OCI-LY7 (cell line): ENCODE measurements at regions of chr5 and their contacts with region 1.

Region 1: DNA sequence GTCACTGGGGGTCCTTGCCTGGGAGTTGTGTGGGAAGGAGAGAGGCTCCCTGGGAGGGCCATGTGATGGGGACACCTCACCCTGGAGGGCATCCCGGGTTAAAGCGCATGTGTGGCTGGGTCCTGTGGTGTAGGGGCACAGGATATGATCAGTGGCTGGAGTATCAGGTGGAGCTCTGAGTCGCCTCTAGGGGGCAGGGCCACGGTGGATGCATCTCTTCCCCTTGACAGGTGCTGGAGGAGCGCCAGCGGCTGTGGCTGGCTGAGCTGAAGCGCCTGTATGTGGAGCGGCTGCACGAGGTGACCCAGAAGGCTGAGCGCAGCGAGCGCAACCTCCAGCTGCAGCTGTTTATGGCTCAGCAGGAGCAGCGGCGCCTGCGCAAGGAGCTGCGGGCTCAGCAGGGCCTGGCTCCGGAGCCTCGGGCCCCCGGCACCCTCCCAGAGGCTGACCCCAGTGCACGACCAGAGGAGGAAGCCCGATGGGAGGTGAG is 7.6 kb downstream of the N4BP3 start:
- DNase-seq: peak; percentile 98
- H3K4me3 ChIP-seq: peak overlapping the region; percentile 37
- H3K27ac ChIP-seq: peak overlapping the region; percentile 90
- H3K4me1 ChIP-seq: peaks cover 81% of the 10 kb centered on the region
- CTCF ChIP-seq: peak; percentile 87

Region 2: DNA sequence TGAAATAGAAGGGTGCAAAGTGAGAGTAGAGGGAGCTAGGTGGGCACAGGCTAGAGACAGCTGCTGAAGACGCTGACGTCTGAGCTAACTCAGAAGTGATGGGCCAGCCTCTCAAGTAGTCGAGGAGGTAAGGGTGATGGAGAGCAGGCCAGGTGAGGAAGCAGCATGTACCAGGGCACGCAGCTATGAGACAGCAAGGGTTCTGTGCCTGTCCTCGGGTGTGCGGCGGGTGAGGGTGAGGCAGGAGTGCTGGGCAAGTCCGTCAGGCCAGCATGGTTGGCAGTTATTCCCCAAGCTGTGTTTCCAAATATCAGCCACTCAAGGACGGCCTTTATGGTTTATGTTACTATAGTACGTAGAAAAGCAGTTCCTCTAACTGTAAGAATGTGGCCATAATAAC is 16.1 kb after region 1 on chr5:
- CTCF ChIA-PET with region 1: interaction called, 3 read pairs
- POLR2A ChIA-PET with region 1: interaction called, 13 read pairs
- intact Hi-C with region 1: no loop called
- DNase-seq: no peak
- H3K4me3 ChIP-seq: no peak overlapping the region
- H3K27ac ChIP-seq: no peak overlapping the region
- H3K4me1 ChIP-seq: peaks cover 5% of the 10 kb centered on the region
- CTCF ChIP-seq: no peak

Region 3: GRCh38 chr5:178146020-178146820 is 25.3 kb after region 1 on chr5:
- CTCF ChIA-PET with region 1: interaction called, 5 read pairs
- POLR2A ChIA-PET with region 1: interaction called, 5 read pairs
- intact Hi-C with region 1: loop called (anchors 1 kb)
- DNase-seq: peak; percentile 81
- H3K4me3 ChIP-seq: no peak overlapping the region
- H3K27ac ChIP-seq: no peak overlapping the region
- H3K4me1 ChIP-seq: peaks cover 4% of the 10 kb centered on the region
- CTCF ChIP-seq: peak; percentile 90